ENCODE measurements at regions of chr6 and their contacts with region 1.

Region 1: DNA sequence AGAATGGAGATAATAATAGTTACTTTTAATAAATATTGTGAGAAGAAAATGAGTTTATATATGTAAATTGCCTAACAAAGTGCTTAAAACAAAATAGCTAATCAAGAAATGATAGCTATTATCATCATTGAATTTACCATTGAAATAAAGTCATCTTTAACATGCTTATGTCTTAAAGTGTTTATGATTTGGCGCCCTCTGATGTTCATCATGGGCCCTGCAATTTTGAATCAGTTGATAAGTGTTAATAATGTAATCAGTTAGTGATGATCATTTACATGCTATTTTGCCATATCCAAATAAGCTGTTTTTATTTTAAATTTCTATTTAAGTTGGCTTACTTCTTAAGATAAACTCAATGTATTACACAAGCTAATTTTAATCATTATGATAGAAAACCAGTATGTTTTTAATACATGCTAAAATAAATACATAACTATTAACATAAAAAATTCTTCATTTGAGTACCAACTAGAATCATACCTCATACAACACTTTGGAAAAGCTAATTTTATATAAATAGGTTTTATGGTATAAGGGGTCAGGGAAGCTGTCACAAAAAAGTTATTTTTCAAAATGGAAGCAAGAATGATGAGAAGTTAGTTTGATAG is 39.2 kb upstream of the TPD52L1 start:
- DNase-seq: peak in 2 of 3 donors; percentile 34 to 71
- ATAC-seq: no peak
- H3K4me3 ChIP-seq: no peak overlapping the region
- H3K27ac ChIP-seq: no peak overlapping the region
- H3K4me1 ChIP-seq: no peaks in the 10 kb centered on the region
- H3K27me3 ChIP-seq: no peaks in the 10 kb centered on the region

Region 2: DNA sequence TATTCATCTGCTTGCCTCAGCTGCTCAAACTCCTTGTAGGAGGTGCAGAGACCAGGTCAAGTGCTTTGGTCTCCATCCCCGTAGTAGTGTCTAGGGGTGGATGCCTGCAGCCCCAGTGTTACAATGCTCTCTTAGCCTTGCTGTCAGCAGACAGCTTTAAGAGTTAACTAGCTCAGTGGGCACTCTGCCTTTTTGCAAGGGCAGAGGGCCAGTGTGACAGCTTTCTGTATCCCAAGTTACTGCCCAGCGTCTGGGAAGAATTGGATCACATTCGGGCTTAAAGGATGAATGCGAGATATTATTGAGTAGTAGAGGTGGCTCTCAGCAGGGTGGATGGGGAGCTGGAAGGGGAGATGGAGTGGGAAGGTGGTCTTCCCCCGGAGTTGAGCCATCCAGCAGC is 492.0 kb before region 1 on chr6:
- intact Hi-C with region 1: no loop called
- DNase-seq: no peak
- ATAC-seq: no peak
- H3K4me3 ChIP-seq: no peak overlapping the region
- H3K27ac ChIP-seq: no peak overlapping the region
- H3K4me1 ChIP-seq: no peaks in the 10 kb centered on the region
- H3K27me3 ChIP-seq: no peaks in the 10 kb centered on the region

Region 3: GRCh38 chr6:124870611-124871459 is 243.5 kb before region 1 on chr6:
- intact Hi-C with region 1: loop called (anchors 2 to 5 kb)
- DNase-seq: no peak
- ATAC-seq: no peak
- H3K4me3 ChIP-seq: no peak overlapping the region
- H3K27ac ChIP-seq: no peak overlapping the region
- H3K4me1 ChIP-seq: no peaks in the 10 kb centered on the region
- H3K27me3 ChIP-seq: no peaks in the 10 kb centered on the region

Measured in right cardiac atrium (tissue), 5 donors.